A549 (cell line): ENCODE measurements at regions of chr5 and their contacts with region 1.

Region 1: GRCh38 chr5:90802474-90803317 is 244.1 kb downstream of the ADGRV1 start:
- DNase-seq: peak; percentile 37 to 60
- ATAC-seq: peak; percentile 79 to 92; a peak in 5 of 6 replicates
- H3K4me3 ChIP-seq: no peak overlapping the region
- H3K27ac ChIP-seq: no peak overlapping the region
- H3K4me1 ChIP-seq: no peaks in the 10 kb centered on the region
- CTCF ChIP-seq: peak; percentile 70
- EP300 ChIP-seq: no peak
- POLR2A ChIP-seq: no peak
- RAD21 ChIP-seq: peak; percentile 51 to 52; a peak in 4 of 5 replicates

Region 2: GRCh38 chr5:88842784-88843183 is 1959.9 kb before region 1 on chr5:
- CTCF ChIA-PET with region 1: no interaction called
- POLR2A ChIA-PET with region 1: interaction called, 10 read pairs
- DNase-seq: no peak
- ATAC-seq: no peak
- H3K4me3 ChIP-seq: no peak overlapping the region
- H3K27ac ChIP-seq: no peak overlapping the region
- H3K4me1 ChIP-seq: no peaks in the 10 kb centered on the region
- CTCF ChIP-seq: no peak
- EP300 ChIP-seq: no peak
- POLR2A ChIP-seq: no peak
- RAD21 ChIP-seq: no peak